PC-3 (cell line): ENCODE measurements at regions of chr7 and their contacts with region 1.

Region 1: DNA sequence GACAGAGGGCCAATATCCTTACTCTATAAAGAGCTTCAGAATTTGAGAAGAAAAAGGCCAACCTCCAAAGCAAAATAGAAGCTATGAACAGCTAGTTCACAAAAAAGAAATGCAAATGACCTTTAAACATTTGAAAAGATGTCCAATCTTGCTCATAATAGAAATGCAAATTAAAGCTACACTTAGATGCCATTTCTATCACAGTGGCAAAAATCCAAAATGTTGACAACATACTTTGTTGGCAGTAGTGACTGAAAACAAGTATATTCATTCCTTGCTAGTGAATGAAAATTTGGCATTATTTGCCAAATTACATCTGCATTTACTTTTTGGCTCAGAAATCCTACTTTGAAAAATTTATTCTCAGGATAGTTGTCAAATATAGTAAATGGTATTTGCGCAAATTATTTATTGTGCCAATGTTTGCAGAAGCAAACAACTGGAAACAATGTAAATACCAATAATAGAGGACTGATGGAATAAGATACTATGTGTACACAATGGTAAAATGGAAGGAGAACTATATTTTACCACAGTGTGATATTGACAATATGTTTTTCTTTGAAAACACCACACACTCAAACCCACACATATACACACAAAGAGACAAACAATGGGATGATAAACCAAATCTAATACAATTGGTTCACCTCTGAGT is 9.4 kb downstream of the TMEM106B start:
- DNase-seq: peak; percentile 24
- ATAC-seq: peak; percentile 93
- H3K4me3 ChIP-seq: no peak overlapping the region
- H3K27ac ChIP-seq: no peak overlapping the region
- H3K4me1 ChIP-seq: peaks cover 3% of the 10 kb centered on the region; the same call in 1 of the 2 replicates
- H3K27me3 ChIP-seq: no peaks in the 10 kb centered on the region
- CTCF ChIP-seq: no peak

Region 2: GRCh38 chr7:12130636-12131035 is 89.9 kb before region 1 on chr7:
- CTCF ChIA-PET with region 1: no interaction called
- POLR2A ChIA-PET with region 1: no interaction called
- intact Hi-C with region 1: loop called (anchors 2 kb)
- DNase-seq: peak; percentile 86
- ATAC-seq: peak; percentile 97
- H3K4me3 ChIP-seq: no peak overlapping the region
- H3K27ac ChIP-seq: peak overlapping the region; percentile 45
- H3K4me1 ChIP-seq: peaks cover 18% of the 10 kb centered on the region
- H3K27me3 ChIP-seq: no peaks in the 10 kb centered on the region
- CTCF ChIP-seq: no peak

Region 3: DNA sequence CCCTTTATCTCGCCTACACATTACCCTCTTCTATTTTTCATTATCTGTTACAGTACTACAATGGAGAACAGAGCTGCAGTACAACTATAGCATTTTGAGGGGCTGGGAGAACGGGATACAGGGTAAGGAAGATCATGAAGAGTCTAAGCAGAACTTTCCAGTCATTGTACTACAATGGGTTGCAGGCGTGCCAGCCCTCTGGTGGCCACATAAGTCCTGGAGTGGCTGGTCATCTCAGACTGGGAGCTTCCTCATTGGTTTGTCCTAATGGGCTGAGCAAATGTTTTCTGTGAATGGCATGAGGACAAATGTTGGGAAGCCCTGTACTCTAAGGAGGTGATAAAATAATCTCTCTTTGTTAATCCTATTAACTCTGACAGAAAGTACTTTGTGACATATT is 23.6 kb after region 1 on chr7:
- CTCF ChIA-PET with region 1: no interaction called
- POLR2A ChIA-PET with region 1: interaction called, 3 read pairs
- intact Hi-C with region 1: loop called (anchors 2 kb)
- DNase-seq: peak; percentile 59
- ATAC-seq: peak; percentile 83
- H3K4me3 ChIP-seq: no peak overlapping the region
- H3K27ac ChIP-seq: no peak overlapping the region
- H3K4me1 ChIP-seq: peaks cover 11% of the 10 kb centered on the region
- H3K27me3 ChIP-seq: no peaks in the 10 kb centered on the region
- CTCF ChIP-seq: peak; percentile 74

Region 4: DNA sequence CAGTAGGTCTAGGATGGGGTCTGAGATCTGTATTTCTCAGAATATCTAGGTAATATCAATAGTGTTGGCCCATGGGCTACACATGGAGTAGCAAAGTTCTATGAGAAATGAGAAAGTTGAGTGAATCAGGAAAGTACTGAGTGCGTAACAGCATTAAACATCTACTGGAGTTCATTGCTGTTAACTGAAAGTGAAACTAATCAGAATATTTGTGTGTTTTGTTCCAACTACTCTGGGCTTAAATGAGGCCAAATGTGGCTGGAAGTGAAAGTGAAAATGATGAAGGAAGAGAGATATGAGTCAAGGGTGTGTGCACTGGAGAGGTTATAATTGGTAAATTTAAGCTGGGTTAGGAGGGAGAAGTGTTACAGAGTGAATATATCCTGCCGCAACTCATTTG is 37.1 kb after region 1 on chr7:
- CTCF ChIA-PET with region 1: no interaction called
- POLR2A ChIA-PET with region 1: no interaction called
- intact Hi-C with region 1: no loop called
- DNase-seq: peak; percentile 15
- ATAC-seq: peak; percentile 16; the same call in 1 of the 2 replicates
- H3K4me3 ChIP-seq: no peak overlapping the region
- H3K27ac ChIP-seq: no peak overlapping the region
- H3K4me1 ChIP-seq: peaks cover 12% of the 10 kb centered on the region; the same call in 1 of the 2 replicates
- H3K27me3 ChIP-seq: no peaks in the 10 kb centered on the region
- CTCF ChIP-seq: no peak

Region 5: GRCh38 chr7:13240349-13240748 is 1019.8 kb after region 1 on chr7:
- CTCF ChIA-PET with region 1: no interaction called
- POLR2A ChIA-PET with region 1: no interaction called
- intact Hi-C with region 1: no loop called
- DNase-seq: peak; percentile 7
- ATAC-seq: no peak
- H3K4me3 ChIP-seq: no peak overlapping the region
- H3K27ac ChIP-seq: no peak overlapping the region
- H3K4me1 ChIP-seq: no peaks in the 10 kb centered on the region
- H3K27me3 ChIP-seq: no peaks in the 10 kb centered on the region
- CTCF ChIP-seq: no peak